GM10248 (cell line): ENCODE measurements at regions of chr19 and their contacts with region 1.

Region 1: DNA sequence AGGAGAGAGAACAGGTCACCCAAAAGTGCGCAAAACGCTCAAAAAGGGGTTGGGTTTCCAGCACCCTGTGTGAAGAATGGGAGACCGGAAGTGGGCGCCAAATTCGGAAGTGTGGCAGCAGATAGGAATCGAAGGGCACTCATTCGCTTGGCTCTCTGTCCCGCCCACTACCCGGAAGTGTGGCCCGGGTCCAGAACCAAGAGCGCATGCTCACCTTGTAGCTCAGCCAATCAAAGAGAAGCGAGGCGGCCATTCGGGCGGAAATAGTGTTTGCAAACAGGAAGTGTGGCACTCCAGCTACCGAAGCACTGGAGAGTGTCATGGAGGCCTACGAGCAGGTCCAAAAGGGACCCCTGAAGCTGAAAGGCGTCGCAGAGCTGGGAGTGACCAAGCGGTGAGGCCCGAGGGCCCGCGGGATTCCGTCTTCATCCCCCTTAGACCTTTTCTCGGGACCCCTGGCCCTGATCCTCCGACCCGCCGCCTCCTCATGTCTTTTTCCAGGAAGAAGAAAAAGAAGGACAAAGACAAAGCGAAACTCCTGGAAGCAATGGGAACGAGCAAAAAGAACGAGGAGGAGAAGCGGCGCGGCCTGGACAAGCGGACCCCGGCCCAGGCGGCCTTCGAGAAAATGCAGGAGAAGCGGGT is at the start of gene FAM32A:
- DNase-seq: peak; percentile 99
- CTCF ChIP-seq: no peak

Region 2: GRCh38 chr19:16041299-16041990 is 143.8 kb before region 1 on chr19:
- CTCF ChIA-PET with region 1: interaction called, 25 read pairs
- POLR2A ChIA-PET with region 1: interaction called, 4 read pairs
- DNase-seq: peak; percentile 86
- CTCF ChIP-seq: peak; percentile 93

Region 3: DNA sequence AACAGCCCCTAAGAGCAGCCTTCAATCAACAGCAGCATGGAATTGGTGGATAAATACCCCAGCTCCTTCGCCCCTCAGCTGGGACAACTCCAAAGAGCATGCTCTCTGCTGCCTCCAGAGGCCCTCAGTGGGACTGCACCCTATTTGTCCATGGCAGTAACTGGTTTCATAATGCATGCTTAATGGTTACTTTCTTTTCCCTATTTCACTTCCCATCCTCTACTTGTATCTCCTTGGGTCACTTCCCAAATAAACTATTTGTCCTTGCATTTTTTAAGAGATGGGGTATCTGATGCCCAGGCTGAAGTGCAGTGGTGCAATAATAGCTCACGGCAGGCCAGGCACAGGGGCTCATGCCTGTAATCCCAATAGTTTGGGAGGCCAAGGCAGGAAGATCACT is 122.5 kb before region 1 on chr19:
- CTCF ChIA-PET with region 1: interaction called, 15 read pairs
- POLR2A ChIA-PET with region 1: no interaction called
- DNase-seq: peak; percentile 68
- CTCF ChIP-seq: peak; percentile 76

Region 4: DNA sequence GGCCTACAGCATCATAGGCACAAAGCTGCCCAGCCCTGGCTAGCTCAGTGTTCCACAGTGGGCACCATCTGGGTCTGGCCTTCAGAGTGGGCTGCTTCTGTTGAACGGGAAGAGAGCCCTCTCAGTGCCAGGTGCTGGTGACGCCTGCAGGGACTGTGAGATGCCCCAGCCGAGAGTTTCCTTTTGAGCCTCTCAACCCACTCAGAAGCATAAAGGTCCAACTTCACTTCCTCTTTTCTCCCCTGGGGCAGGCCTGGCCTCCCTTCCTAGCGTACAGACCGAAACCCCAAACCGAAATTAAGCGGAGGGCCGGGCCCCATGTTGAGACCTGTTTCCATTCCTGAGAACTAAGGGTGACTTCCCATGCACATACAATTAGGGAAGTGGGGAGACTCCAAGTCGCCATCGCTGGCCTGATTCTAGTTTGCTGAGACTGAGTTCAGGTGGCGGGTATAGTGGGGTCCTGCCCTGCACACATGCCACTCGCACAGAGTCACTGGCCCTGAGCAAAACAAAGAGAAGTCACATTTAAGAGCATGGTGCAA is 66.7 kb before region 1 on chr19:
- CTCF ChIA-PET with region 1: interaction called, 16 read pairs
- POLR2A ChIA-PET with region 1: interaction called, 3 read pairs
- DNase-seq: peak; percentile 88
- CTCF ChIP-seq: no peak

Region 5: GRCh38 chr19:16168465-16169081 is 16.7 kb before region 1 on chr19:
- CTCF ChIA-PET with region 1: interaction called, 20 read pairs
- POLR2A ChIA-PET with region 1: no interaction called
- DNase-seq: no peak
- CTCF ChIP-seq: no peak

Region 6: GRCh38 chr19:16197622-16198369 is 12.6 kb after region 1 on chr19 and contains the start of gene AP1M1:
- CTCF ChIA-PET with region 1: interaction called, 16 read pairs
- POLR2A ChIA-PET with region 1: interaction called, 6 read pairs
- DNase-seq: peak; percentile 100
- CTCF ChIP-seq: no peak

Region 7: DNA sequence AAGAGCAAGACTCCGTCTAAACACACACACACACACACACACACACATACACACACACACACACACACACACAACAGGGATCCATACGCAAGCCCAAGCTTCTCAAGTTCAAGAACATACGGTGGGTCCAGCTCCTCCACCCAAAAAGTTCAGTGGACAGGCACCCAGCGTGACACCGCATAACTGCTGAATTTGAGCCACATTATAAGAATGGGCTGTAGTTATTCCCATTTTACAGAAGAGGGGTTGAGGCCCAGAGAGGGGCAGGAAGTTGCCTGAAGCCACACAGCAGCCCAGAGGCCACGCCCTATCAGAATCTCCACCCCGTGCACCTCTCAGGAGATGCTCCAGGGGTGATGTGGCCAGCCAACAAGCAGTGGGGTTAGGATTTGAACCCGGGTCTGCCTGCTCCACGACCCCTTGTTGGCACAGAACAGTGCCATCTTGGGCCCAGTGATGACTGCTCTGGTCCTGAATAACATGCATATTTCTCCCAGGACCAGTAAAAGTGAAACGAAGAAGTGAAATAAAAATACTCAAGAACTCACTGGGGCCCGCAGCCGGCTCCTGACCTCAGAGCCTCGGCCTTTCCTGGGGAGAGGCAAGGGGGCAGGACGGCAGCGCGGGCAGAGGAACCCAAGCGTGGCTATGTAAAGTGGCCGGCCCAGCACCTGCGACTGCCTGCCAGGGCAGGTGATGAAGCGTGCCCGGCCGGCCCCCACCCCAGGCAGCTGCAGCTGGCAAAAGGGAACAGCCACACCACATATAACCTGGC is 74.3 kb after region 1 on chr19:
- CTCF ChIA-PET with region 1: no interaction called
- POLR2A ChIA-PET with region 1: no interaction called
- DNase-seq: peak; percentile 75
- CTCF ChIP-seq: no peak